GM13976 (cell line): ENCODE measurements at regions of chr18 and their contacts with region 1.

Region 1: DNA sequence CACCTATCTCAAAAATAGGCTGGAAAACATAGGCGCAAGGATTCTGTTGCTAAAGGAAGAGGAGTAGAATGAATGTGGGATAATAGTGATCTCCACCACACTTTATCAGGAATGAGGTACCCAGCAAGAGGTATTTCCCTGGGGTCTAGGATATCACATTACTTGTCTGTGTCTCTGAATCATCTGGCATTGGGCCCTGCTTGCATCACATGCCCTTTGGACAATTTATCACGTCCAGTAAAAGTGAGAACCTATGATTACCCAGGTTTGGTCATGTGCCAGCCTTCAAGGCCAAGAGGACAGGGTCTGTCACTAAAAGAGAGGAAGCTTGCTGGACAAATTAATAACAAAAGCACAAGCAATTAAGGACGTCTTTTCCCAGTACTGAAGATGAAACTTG is 11.4 kb upstream of the TRAPPC8 start:
- DNase-seq: no peak
- CTCF ChIP-seq: no peak

Region 2: DNA sequence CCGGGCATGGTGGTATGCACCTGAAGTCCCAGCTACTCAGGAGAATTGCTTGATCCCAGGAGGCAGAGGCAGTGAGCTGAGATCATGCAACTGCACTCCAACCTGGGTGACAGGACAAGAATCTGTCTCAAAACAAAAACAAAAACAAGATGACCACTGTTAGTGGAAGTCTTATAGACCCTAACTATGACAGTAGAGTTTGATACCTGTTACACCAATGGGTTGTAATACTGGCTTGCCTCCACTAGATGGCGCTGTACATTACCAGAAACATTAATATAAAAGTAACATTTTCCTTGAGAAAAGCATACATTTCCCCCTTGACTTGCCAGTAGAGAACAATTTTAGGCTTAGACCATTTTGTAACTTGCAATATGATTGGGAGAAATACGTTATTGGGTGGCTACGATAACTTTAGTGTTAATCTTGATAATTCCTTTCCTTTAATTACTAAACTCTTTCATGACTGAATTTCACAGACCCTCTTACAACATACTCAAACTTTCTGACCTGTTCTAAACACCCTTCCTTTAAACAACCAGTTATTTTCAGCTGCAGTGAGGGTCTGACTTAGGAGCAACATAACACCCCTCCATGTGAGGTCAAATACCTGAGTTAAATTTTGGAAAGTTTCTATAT is 213.1 kb before region 1 on chr18:
- in situ Hi-C with region 1: loop called (anchors 25 kb)
- DNase-seq: no peak
- CTCF ChIP-seq: peak; percentile 58

Region 3: DNA sequence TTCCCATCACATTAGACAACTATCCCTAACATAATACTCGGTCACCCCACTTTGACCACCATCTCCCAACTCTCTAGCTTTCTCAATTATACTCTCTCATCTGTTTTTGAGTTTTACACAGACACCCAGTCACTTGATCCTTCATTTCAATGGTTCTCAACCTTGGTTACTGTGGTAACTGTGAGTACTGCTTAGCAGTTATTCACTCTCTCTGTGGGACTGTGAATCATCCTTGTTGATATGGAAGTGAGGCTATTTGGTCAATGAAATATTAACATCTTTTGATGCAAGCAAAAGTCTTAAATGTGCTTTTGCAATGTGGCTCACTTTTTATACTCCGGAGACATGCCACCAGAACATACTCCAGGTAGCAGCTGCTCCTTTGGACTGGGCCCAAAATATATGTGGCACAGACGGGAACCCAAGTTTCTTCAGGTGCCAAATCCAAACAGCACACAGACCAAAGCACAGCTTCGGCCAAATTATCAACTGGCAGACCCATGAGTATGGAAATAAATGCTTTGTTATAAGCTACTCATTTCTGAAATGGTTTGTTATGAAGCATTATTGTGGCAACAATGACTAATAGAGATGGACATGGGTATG is 118.7 kb before region 1 on chr18:
- in situ Hi-C with region 1: no loop called
- DNase-seq: no peak
- CTCF ChIP-seq: no peak

Region 4: DNA sequence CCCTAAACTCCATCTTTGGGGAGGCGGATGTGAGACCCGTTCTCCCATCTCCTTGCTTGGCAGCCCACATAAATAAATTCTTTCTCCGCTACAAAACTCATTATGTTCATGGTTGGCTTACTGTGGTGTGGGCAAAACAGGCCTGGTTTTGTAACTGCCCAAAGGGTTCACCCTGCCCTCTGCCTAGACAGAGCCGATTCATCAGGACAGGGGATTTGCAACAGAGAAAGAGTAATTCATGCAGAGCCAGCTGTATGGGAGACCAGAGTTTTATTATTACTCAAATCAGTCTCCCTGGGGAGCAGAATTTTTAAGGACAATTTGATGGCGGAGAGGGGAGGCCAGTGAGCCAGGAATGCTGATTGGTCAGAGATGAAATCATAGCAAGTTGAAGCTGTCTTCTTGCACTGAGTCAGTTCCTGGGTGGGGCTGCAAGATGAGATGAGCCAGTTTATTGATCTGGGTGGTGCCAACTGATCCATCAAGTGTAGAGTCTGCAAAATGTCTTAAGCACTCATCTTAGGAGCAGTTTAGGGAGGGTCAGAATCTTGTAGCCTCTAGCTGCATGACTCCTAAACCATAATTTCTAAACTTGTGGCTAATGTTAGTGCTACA is 55.9 kb after region 1 on chr18:
- in situ Hi-C with region 1: no loop called
- DNase-seq: no peak
- CTCF ChIP-seq: no peak